WTC11 (cell line): ENCODE measurements at regions of chr1 and their contacts with region 1.

Region 1: DNA sequence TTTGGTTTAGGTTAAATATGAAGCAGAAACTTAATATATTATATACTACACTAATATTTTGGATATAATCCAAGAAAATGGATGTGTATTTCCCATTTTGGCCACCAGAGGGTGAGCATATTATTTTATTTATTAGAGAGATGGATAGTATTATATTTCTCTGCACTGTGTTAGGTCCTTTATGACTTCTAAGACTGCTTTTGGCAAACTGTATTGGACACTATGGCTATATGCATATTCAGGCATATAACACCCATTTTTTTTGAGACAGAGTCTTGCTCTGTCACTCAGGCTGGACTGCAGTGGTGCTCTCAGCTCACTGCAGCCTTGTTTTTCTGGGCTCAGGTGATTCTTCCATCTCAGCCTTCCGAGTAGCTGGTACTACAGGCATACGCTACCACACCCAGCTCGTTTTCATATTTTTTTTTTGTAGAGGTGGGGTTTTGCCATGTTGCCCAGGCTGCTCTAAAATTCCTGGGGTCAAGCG is 17.8 kb upstream of the PGM1 start:
- DNase-seq: no peak
- ATAC-seq: peak; percentile 79
- H3K4me3 Mint-ChIP-seq: no peak overlapping the region
- H3K27ac Mint-ChIP-seq: no peak overlapping the region
- H3K4me1 Mint-ChIP-seq: peaks cover 20% of the 10 kb centered on the region
- H3K27me3 Mint-ChIP-seq: no peaks in the 10 kb centered on the region
- CTCF ChIP-seq: peak; percentile 89

Region 2: GRCh38 chr1:63557365-63557987 is 17.9 kb before region 1 on chr1:
- CTCF ChIA-PET with region 1: interaction called, 11 read pairs
- POLR2A ChIA-PET with region 1: no interaction called
- DNase-seq: peak; percentile 52
- ATAC-seq: peak; percentile 83
- H3K4me3 Mint-ChIP-seq: no peak overlapping the region
- H3K27ac Mint-ChIP-seq: peak overlapping the region; percentile 10
- H3K4me1 Mint-ChIP-seq: peaks cover 5% of the 10 kb centered on the region
- H3K27me3 Mint-ChIP-seq: no peaks in the 10 kb centered on the region
- CTCF ChIP-seq: peak; percentile 55

Region 3: DNA sequence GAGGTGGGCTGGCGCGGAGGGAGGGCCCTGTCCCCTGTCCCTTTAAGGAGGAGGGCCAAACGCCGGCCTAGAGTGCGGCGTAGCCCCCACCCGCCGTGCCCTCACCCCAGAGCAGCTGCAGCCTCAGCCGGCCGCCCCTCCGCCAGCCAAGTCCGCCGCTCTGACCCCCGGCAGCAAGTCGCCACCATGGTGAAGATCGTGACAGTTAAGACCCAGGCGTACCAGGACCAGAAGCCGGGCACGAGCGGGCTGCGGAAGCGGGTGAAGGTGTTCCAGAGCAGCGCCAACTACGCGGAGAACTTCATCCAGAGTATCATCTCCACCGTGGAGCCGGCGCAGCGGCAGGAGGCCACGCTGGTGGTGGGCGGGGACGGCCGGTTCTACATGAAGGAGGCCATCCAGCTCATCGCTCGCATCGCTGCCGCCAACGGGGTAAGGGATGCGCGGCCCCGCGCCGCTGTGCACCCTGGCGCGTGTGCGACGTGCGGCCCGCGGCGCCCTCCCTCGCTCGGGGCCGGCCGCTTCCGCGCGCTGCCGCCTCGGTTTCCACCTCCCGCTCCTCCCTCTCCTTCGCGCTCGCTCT is 18.0 kb after region 1 on chr1 and contains the start of gene PGM1:
- CTCF ChIA-PET with region 1: interaction called, 21 read pairs
- POLR2A ChIA-PET with region 1: no interaction called
- DNase-seq: peak; percentile 79
- ATAC-seq: peak; percentile 65
- H3K4me3 Mint-ChIP-seq: peak within 1 kb of the TSS; percentile 90
- H3K27ac Mint-ChIP-seq: peak within 1 kb of the TSS; percentile 92
- H3K4me1 Mint-ChIP-seq: peaks cover 24% of the 10 kb centered on the region
- H3K27me3 Mint-ChIP-seq: no peaks in the 10 kb centered on the region
- CTCF ChIP-seq: no peak
- total RNA-seq, gene PGM1: 111 to 146 TPM (median 143 TPM) in 3 replicates

Region 4: GRCh38 chr1:63601061-63601460 is 25.7 kb after region 1 on chr1:
- CTCF ChIA-PET with region 1: interaction called, 14 read pairs
- POLR2A ChIA-PET with region 1: no interaction called
- DNase-seq: no peak
- ATAC-seq: no peak
- H3K4me3 Mint-ChIP-seq: no peak overlapping the region
- H3K27ac Mint-ChIP-seq: no peak overlapping the region
- H3K4me1 Mint-ChIP-seq: peaks cover 32% of the 10 kb centered on the region
- H3K27me3 Mint-ChIP-seq: no peaks in the 10 kb centered on the region
- CTCF ChIP-seq: no peak

Region 5: DNA sequence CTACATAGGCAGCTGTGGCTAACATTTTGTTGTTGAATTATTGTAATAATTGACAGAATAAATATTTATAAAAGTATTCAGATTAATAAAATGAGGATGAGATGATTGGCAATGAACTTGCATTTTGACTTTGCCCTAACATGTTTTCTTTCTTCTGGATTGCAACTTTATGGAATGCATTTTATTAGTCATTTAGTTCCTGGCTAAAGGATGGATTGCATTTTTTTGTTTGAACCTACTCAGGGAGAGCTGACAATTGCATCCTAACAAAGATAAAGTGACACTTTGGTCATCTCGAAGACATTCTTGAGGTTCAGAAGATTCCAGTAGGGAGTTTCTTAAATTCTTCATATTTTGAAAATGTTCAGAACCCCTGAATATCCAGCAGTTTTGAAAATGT is 55.3 kb after region 1 on chr1:
- CTCF ChIA-PET with region 1: no interaction called
- POLR2A ChIA-PET with region 1: no interaction called
- DNase-seq: no peak
- ATAC-seq: no peak
- H3K4me3 Mint-ChIP-seq: no peak overlapping the region
- H3K27ac Mint-ChIP-seq: no peak overlapping the region
- H3K4me1 Mint-ChIP-seq: peaks cover 6% of the 10 kb centered on the region
- H3K27me3 Mint-ChIP-seq: no peaks in the 10 kb centered on the region
- CTCF ChIP-seq: no peak

Region 6: GRCh38 chr1:63968663-63969440 is 393.5 kb after region 1 on chr1:
- CTCF ChIA-PET with region 1: no interaction called
- POLR2A ChIA-PET with region 1: no interaction called
- DNase-seq: no peak
- ATAC-seq: no peak
- H3K4me3 Mint-ChIP-seq: no peak overlapping the region
- H3K27ac Mint-ChIP-seq: no peak overlapping the region
- H3K4me1 Mint-ChIP-seq: peaks cover 27% of the 10 kb centered on the region
- H3K27me3 Mint-ChIP-seq: no peaks in the 10 kb centered on the region
- CTCF ChIP-seq: no peak